Mammary epithelial cell (primary cell): ENCODE measurements at regions of chr7 and their contacts with region 1.

Region 1: GRCh38 chr7:82044497-82045080 is 274.7 kb upstream of the HGF start:
- DNase-seq: peak; percentile 29
- H3K4me3 ChIP-seq: no peak overlapping the region
- H3K27ac ChIP-seq: no peak overlapping the region
- H3K4me1 ChIP-seq: peaks cover 4% of the 10 kb centered on the region
- H3K27me3 ChIP-seq: no peaks in the 10 kb centered on the region
- CTCF ChIP-seq: peak; percentile 48 to 61

Region 2: GRCh38 chr7:81908220-81908619 is 136.4 kb before region 1 on chr7:
- CTCF ChIA-PET with region 1: no interaction called
- dilution Hi-C with region 1: no loop called
- in situ Hi-C with region 1: no loop called
- intact Hi-C with region 1: no loop called
- DNase-seq: no peak
- H3K4me3 ChIP-seq: no peak overlapping the region
- H3K27ac ChIP-seq: no peak overlapping the region
- H3K4me1 ChIP-seq: no peaks in the 10 kb centered on the region
- H3K27me3 ChIP-seq: no peaks in the 10 kb centered on the region
- CTCF ChIP-seq: no peak

Region 3: GRCh38 chr7:82029236-82029913 is 15.2 kb before region 1 on chr7:
- CTCF ChIA-PET with region 1: no interaction called
- dilution Hi-C with region 1: no loop called
- in situ Hi-C with region 1: no loop called
- intact Hi-C with region 1: no loop called
- DNase-seq: no peak
- H3K4me3 ChIP-seq: no peak overlapping the region
- H3K27ac ChIP-seq: no peak overlapping the region
- H3K4me1 ChIP-seq: no peaks in the 10 kb centered on the region
- H3K27me3 ChIP-seq: no peaks in the 10 kb centered on the region
- CTCF ChIP-seq: no peak

Region 4: DNA sequence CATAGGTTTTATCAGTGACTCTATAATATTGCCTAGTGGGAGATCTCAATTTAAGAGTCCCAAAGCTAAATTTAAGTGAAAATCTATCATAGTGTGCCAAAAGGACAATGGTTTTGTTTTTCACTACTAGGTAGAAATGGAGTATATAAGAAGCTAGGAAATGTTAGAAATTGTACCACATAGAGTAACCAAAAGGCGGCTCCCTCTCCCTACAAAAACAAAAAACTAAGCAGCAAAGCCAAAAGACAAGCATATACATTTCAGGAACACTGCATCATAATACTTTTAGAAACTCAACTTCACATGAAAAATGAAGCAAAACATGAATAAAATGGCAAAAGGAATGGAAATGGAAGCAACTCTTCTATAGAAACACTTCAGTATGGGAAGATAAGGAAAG is 127.4 kb after region 1 on chr7:
- CTCF ChIA-PET with region 1: no interaction called
- dilution Hi-C with region 1: no loop called
- in situ Hi-C with region 1: no loop called
- intact Hi-C with region 1: loop called (anchors 10 kb)
- DNase-seq: no peak
- H3K4me3 ChIP-seq: no peak overlapping the region
- H3K27ac ChIP-seq: no peak overlapping the region
- H3K4me1 ChIP-seq: no peaks in the 10 kb centered on the region
- H3K27me3 ChIP-seq: peaks cover 1% of the 10 kb centered on the region
- CTCF ChIP-seq: peak in 1 of 2 donors; percentile 36

Region 5: GRCh38 chr7:82443547-82444219 is 399.1 kb after region 1 on chr7 and contains the start of gene CACNA2D1:
- CTCF ChIA-PET with region 1: no interaction called
- dilution Hi-C with region 1: no loop called
- in situ Hi-C with region 1: no loop called
- intact Hi-C with region 1: loop called (anchors 5 kb)
- DNase-seq: peak; percentile 55
- H3K4me3 ChIP-seq: peak within 1 kb of the TSS; percentile 66 to 75 (median 67)
- H3K27ac ChIP-seq: no peak within 1 kb of the TSS
- H3K4me1 ChIP-seq: peaks cover 11% of the 10 kb centered on the region
- H3K27me3 ChIP-seq: peaks cover 11% of the 10 kb centered on the region
- CTCF ChIP-seq: no peak
- total RNA-seq, gene CACNA2D1: 7.0 to 24.0 TPM

Region 6: DNA sequence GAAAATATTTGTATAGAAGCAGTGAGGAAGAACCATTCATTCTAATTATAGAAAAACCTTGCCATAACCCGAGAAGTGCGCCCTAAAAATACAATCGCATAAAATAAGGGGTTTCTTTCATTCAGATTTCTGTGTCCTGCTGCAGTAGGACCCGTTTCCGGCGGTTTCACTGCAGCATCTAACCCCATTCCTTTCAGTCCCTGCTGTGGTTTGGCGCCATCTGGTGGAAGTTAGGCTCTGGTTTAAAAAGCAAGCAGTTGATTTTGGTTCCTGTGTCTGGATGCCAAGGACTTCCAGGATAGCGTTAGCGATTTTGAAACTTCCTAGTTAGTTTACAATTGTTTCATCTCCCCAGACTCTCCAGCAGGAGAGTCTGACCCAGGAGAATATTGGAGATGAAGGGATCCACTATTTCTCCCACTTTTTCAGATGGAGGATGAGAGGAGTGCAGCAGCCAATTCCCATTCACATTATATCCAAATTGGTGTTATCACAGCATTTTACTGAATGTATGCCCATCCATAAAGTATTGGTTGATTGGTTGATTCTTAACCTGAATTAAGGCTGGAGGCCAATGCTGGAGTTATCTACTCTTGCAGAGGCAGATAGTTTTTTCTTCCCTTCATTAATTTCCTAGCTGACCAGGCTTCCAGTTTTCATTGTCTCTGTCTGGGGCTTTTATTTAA is 527.7 kb after region 1 on chr7:
- CTCF ChIA-PET with region 1: no interaction called
- dilution Hi-C with region 1: no loop called
- in situ Hi-C with region 1: loop called (anchors 10 to 25 kb)
- intact Hi-C with region 1: loop called (anchors 2 kb)
- DNase-seq: peak; percentile 60
- H3K4me3 ChIP-seq: no peak overlapping the region
- H3K27ac ChIP-seq: no peak overlapping the region
- H3K4me1 ChIP-seq: no peaks in the 10 kb centered on the region
- H3K27me3 ChIP-seq: no peaks in the 10 kb centered on the region
- CTCF ChIP-seq: peak; percentile 85 to 95

Region 7: DNA sequence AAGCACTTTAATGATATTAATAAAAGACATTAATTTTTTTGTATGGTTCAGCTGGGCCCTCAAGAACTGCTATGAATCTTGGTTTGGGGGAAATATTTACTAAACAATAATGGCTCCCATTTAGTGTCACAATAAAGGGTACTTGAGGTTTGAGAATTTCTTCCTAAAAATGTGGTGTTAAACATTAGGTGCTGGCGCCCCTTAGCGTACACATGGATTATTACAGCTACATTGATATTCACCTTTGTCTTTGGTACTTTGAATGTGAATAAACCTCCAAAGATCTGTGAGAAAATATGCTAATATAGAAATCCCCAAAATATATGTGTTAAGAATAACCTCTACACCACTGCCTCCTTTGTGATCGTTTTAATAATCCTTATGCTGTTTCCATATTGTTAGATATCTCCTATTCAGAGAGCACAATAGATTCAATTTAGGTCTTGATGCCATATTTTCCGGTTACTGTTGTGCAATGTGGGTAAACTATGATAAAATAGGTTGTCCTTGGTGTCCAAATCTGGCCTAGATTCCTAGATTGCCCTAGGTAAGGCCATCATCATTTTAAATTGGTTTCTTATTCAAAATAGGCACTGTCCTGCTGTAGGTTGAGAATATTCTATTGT is 560.8 kb after region 1 on chr7:
- CTCF ChIA-PET with region 1: interaction called, 3 read pairs
- dilution Hi-C with region 1: no loop called
- in situ Hi-C with region 1: no loop called
- intact Hi-C with region 1: loop called (anchors 2 kb)
- DNase-seq: peak; percentile 16
- H3K4me3 ChIP-seq: no peak overlapping the region
- H3K27ac ChIP-seq: no peak overlapping the region
- H3K4me1 ChIP-seq: no peaks in the 10 kb centered on the region
- H3K27me3 ChIP-seq: no peaks in the 10 kb centered on the region
- CTCF ChIP-seq: peak; percentile 74 to 75